ENCODE measurements at regions of chr1 and their contacts with region 1.

Region 1: DNA sequence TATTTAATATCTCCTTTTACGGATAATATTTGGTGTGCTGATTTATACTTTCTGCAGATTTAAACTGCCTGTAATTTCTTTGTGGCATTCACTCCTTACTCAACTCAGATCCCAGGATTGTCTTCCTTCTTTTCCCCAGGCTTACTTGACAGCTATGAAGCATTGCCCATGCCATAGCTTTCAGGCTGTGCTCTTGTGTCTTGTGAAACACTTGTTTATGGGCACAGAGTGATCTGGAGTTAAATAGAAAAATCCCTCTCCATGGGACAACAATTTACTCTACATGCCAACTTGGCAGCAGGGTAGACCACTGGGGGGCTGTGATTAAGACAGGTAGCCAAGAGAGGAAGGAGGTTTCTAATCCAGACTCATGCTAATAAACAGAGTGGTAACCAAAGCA is 57.4 kb downstream of the PPP1R12B start:
- DNase-seq: no peak
- ATAC-seq: no peak
- H3K4me3 ChIP-seq: no peak overlapping the region
- H3K27ac ChIP-seq: no peak overlapping the region
- H3K4me1 ChIP-seq: peaks cover 0 to 3% of the 10 kb centered on the region in 2 donors
- H3K27me3 ChIP-seq: no peaks in the 10 kb centered on the region

Region 2: DNA sequence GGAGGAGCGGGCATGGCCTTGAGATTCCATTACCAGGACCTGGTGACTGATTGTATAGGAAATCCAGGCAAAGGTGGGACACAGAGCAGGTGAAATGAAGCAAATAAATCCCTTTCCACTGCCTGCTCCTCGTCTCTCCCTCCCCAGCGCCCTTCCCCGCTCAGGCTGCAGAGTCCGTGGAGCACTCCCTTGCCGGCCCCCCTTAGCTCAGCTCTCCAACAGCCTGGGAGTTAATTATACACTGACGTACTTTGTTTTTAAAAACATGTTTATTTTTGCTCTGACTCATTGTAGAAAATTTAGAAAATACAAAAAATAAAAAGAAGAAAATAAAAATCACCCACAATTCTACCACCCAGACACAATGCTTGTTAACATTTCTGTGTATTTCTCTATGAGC is 150.6 kb before region 1 on chr1:
- intact Hi-C with region 1: no loop called
- DNase-seq: no peak
- ATAC-seq: peak; percentile 62
- H3K4me3 ChIP-seq: no peak overlapping the region
- H3K27ac ChIP-seq: peak overlapping the region in 1 of 2 donors; percentile 83
- H3K4me1 ChIP-seq: peaks cover 0 to 3% of the 10 kb centered on the region in 2 donors
- H3K27me3 ChIP-seq: no peaks in the 10 kb centered on the region

Region 3: GRCh38 chr1:202348509-202349205 is 57.3 kb before region 1 on chr1 and contains the start of gene PPP1R12B:
- intact Hi-C with region 1: loop called in 1 of 2 experiments (anchors 10 kb)
- DNase-seq: peak; percentile 98
- ATAC-seq: peak; percentile 99
- H3K4me3 ChIP-seq: peak within 1 kb of the TSS; percentile 80 to 81
- H3K27ac ChIP-seq: peak within 1 kb of the TSS in 1 of 2 donors; percentile 75
- H3K4me1 ChIP-seq: peaks cover 0 to 7% of the 10 kb centered on the region in 2 donors
- H3K27me3 ChIP-seq: no peaks in the 10 kb centered on the region
- total RNA-seq, gene PPP1R12B: 595 to 1,102 TPM

Measured in aorta (tissue), 5 donors.